ENCODE measurements at regions of chr3 and their contacts with region 1.

Region 1: DNA sequence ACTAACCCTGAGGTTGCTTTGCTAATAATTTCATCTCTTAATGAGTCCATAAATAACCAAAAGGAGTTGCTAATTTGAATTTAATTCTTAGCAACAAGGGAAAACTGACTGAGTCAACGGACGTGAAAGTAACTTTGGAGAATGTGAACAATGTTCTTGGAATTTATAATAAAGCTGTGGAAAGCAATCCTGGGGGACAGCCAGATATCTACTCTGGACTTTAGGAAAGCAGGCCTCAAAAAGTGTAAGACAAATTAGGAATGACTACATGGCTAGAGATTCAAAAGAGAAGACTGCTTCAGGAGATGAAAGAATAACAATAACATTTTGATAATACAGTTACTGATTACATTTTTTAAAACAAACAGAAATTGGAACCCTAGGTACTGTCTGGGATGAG is 318.4 kb upstream of the COL8A1 start:
- DNase-seq: no peak
- H3K4me3 Mint-ChIP-seq: no peak overlapping the region
- H3K27ac Mint-ChIP-seq: no peak overlapping the region
- H3K4me1 Mint-ChIP-seq: no peaks in the 10 kb centered on the region
- H3K27me3 Mint-ChIP-seq: no peaks in the 10 kb centered on the region
- CTCF ChIP-seq: no peak

Region 2: GRCh38 chr3:99269606-99270351 is 50.2 kb before region 1 on chr3:
- CTCF ChIA-PET with region 1: no interaction called
- intact Hi-C with region 1: loop called (anchors 10 kb)
- DNase-seq: no peak
- H3K4me3 Mint-ChIP-seq: no peak overlapping the region
- H3K27ac Mint-ChIP-seq: no peak overlapping the region
- H3K4me1 Mint-ChIP-seq: no peaks in the 10 kb centered on the region
- H3K27me3 Mint-ChIP-seq: no peaks in the 10 kb centered on the region
- CTCF ChIP-seq: no peak

Region 3: DNA sequence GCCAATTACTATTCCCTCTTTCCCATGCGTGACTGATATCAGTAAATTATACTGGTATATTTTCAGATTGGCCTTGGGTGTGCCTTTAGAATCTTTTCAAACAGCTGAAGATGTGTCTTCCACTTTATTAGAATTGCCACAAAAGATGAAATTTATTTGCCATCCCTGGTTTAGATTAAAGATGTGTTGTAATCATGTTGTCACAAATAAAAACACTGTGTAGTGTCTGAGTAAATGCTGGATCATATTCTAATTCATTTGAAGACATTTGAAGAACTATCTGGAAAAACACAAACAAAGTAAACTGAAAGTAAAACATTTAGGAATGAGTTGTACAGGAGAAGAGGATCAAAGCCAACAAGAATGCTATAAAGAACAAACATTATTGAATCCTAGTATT is 21.3 kb before region 1 on chr3:
- CTCF ChIA-PET with region 1: no interaction called
- intact Hi-C with region 1: no loop called
- DNase-seq: no peak
- H3K4me3 Mint-ChIP-seq: no peak overlapping the region
- H3K27ac Mint-ChIP-seq: no peak overlapping the region
- H3K4me1 Mint-ChIP-seq: peaks cover 13% of the 10 kb centered on the region
- H3K27me3 Mint-ChIP-seq: peaks cover 25% of the 10 kb centered on the region
- CTCF ChIP-seq: no peak